Activated T-helper 2 cell treated with anti-CD3 and anti-CD28 coated beads, Interferon-gamma antibody, Interleukin-2, Interleukin-4, amounts not matched to agents 10 μg/mL and 5 μg/mL and 100 μg/mL, durations not matched to agents 14 hours and 24 hours and 36 hours (primary cell): ENCODE measurements at regions of chr3 and their contacts with region 1.

Region 1: DNA sequence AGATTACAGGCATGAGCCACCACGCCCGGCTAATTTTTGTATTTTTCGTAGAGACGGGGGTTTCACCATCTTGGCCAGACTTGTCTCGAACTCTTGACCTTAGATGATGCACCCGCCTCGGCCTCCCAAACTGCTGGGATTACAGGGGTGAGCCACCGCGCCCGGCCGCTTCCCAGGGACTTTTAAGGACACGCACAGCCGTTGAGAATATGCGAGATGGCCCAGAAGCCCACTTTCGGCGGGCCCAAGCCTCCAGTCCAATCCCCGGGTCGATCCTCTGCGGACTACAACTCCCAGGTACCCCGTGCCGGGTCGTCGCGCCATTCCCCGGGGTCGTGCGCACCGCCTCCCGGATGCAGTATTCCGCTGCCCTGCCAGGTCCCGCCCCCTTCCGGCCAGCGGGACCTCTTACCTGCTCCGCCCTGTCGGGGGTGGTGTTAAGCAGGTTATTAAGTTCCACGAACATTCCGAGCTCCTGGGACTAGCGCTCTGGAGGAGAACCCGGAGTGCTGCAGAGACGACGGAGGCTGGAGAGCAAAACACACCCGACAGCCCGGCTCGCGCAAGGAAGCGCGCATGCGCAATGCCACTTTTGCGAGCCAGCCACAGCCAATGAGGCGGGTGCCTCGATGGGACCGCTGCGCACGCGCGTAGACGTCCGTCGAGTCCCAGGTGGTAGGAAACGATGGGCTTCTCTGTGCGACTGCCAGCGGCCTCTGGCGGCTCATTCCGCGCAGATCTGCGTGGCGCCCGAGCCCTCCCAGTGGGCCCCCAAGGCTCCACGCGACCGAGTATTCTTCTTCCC is at the start of gene ELP6:
- DNase-seq: peak; percentile 97
- H3K4me3 Mint-ChIP-seq: peak within 1 kb of the TSS; percentile 97
- H3K27ac Mint-ChIP-seq: peak within 1 kb of the TSS; percentile 96
- H3K4me1 Mint-ChIP-seq: peaks cover 17% of the 10 kb centered on the region
- H3K27me3 Mint-ChIP-seq: peaks cover 4% of the 10 kb centered on the region
- total RNA-seq, gene ELP6: 44.0 and 46.8 TPM in 2 replicates

Region 2: GRCh38 chr3:47282424-47283192 is 230.7 kb before region 1 on chr3 and contains the starts of genes KIF9 and KLHL18:
- intact Hi-C with region 1: loop called (anchors 5 kb)
- DNase-seq: peak; percentile 95
- H3K4me3 Mint-ChIP-seq: peak within 1 kb of the TSS; percentile 98
- H3K27ac Mint-ChIP-seq: peak within 1 kb of the TSS; percentile 100
- H3K4me1 Mint-ChIP-seq: peaks cover 17% of the 10 kb centered on the region
- H3K27me3 Mint-ChIP-seq: no peaks in the 10 kb centered on the region
- total RNA-seq, gene KIF9: 3.5 and 4.4 TPM in 2 replicates
- total RNA-seq, gene KLHL18: 35.7 and 40.9 TPM in 2 replicates

Region 3: DNA sequence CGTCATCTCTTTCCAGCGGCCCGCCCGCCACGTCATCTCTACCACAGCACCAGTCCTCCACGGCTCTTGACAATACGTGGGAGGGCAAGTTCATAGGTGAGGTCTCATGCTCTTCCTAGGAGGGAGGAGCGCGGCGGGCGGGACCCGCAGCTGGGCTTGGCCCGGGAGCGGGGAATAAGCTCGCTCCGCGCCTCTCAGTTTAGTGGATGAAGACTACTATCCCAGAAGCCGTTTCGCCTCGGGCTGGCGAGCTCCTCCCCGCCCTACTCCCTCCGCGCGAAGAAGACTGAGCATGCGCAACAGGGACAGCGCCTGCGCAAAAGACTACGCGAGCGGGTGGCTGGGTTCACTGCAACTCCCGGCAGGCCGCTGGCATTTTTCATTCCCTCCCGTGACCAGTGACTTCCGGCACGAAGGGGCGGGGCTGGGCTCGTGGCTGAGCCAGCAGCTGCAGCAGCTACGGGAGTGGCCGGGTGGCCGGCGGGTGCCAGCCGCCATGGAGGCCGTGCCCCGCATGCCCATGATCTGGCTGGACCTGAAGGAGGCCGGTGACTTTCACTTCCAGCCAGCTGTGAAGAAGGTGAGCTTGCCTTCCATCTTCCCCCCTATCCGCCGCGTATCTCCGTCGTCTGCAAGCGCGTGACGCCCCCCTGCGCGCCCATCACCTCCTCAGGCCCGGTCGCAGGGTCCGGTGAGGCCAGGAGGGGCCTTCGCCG is 132.6 kb before region 1 on chr3 and contains the start of gene PTPN23:
- intact Hi-C with region 1: loop called (anchors 1 kb)
- DNase-seq: peak; percentile 99
- H3K4me3 Mint-ChIP-seq: peak within 1 kb of the TSS; percentile 100
- H3K27ac Mint-ChIP-seq: peak within 1 kb of the TSS; percentile 100
- H3K4me1 Mint-ChIP-seq: peaks cover 33% of the 10 kb centered on the region
- H3K27me3 Mint-ChIP-seq: no peaks in the 10 kb centered on the region
- total RNA-seq, gene PTPN23: 35.7 and 38.3 TPM in 2 replicates

Region 4: DNA sequence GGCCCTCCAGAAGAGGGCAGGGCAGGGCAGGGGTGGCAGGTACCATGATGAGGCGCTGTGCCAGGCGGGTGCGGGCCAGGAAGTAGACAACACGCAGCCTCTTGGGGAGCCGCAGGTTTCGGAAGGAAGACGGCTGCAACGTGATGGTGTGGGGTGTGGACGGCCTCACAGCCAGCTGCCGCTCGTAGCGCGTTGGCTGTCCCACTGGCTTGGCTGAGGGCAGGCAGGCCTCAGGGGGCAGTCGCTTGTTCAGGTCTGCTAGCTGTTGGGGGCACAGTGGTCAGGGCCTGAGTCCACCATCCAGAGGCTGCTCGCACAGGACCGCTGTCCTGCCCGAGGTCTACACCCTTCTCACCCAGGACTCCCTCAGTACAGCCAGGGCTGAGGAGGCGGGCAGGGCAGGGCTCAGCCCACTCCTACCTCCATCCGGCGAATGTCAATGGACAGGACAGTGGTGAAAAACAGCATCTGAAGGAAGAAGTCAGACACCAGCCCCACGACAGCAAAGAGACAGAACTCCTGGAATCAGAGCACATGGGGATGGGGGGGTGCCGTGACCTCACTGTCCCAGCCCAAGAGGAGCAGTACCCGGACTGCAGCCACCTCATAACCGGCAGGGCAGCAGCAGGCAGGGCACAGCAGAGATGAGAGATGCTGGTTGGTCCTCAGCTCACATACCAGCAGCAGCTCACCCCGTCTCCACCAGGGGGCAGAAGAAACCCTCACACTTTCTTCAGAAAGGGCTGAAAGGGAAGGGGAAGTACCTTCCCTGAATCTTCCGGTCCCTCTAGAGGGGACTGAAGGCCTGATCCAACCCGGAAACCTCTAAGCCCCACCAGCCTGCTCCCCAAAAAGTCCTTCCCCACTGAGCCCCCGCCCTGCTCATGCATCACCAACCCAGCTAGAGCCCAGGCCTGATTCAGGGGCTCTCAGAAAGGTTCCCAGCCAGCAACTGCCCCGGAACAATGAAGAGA is 92.5 kb before region 1 on chr3:
- intact Hi-C with region 1: loop called (anchors 1 kb)
- DNase-seq: peak; percentile 83
- H3K4me3 Mint-ChIP-seq: peak overlapping the region; percentile 65
- H3K27ac Mint-ChIP-seq: peak overlapping the region; percentile 99
- H3K4me1 Mint-ChIP-seq: peaks cover 12% of the 10 kb centered on the region
- H3K27me3 Mint-ChIP-seq: no peaks in the 10 kb centered on the region

Region 5: DNA sequence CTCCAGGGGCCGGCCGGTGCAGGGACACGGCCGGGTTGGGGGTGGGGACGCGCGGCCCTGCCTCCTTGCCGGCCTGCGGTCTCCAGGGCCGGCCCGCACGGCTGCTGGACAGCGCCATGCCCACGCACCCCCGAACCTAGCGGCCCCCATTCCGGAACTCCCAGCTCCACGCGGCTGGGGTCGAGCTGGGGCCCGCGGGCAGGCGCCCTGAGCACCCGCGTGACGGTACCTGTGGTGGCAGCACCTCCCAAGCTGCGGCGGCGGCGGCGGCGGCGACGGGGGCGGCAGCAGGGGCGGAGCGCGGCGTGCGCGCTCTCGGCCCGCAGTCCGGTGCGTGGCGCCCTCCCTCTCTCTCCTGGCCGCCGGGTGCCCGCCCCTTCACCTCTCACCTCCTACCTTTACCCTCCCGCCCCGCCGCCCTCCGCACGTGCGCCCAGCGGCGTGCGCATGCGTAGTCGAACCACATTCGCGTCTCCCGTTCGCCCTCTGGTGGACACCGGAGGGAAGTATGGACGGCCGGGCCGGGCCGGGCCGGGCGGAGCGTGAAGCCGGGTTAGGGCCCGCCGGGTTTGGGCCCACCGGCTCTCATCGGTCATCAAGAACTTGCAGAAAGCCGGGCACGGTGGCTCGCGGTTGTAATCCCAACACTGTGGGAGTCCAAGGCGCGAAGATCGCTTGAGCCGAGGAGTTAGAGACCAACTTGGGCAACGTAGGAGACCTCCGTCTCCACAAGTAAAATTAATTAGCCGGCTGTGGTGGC is 37.6 kb before region 1 on chr3 and contains the start of gene SCAP:
- intact Hi-C with region 1: loop called (anchors 1 kb)
- DNase-seq: peak; percentile 92
- H3K4me3 Mint-ChIP-seq: peak within 1 kb of the TSS; percentile 99
- H3K27ac Mint-ChIP-seq: peak within 1 kb of the TSS; percentile 94
- H3K4me1 Mint-ChIP-seq: peaks cover 17% of the 10 kb centered on the region
- H3K27me3 Mint-ChIP-seq: no peaks in the 10 kb centered on the region
- total RNA-seq, gene SCAP: 79.6 and 83.9 TPM in 2 replicates

Region 6: DNA sequence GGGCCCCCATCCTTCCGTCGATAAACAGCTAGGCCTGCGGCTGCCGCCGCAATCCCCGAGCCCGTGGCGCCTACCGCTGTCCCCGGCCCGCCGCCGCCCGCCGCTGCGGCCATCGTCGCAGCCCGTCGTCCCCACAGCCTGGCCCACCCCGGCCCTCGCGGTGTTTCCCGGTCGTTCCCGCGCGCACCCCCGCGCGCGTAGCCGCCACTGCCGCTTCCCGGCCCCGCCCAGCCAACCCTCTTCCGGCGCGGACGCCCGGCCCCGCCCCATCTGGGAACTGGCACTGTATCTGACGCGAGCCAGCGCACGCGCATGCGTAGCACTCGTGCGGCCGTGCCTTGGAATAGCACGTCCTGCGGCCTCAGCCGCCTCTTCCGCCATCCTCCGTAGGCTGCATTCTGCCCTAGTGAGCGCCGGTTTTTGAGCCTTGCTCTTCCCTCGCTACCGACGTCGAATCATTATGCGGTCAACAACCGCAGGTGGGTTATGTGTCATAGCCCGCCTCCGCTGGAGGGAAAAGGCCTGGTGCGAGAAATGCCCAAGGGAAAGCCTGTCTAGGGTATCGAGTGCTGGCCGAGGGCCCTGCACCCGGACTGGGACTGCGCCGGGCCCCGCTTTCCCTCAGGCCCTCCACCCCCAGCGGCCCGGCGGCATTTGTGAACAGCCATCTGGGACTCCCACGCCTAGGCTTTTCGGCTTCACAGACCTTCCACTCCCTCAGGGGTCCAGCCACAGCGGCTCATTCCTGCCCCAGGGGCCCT is 268.5 kb after region 1 on chr3 and contains the start of gene SMARCC1:
- intact Hi-C with region 1: loop called (anchors 1 kb)
- DNase-seq: peak; percentile 99
- H3K4me3 Mint-ChIP-seq: peak within 1 kb of the TSS; percentile 92
- H3K27ac Mint-ChIP-seq: peak within 1 kb of the TSS; percentile 99
- H3K4me1 Mint-ChIP-seq: peaks cover 17% of the 10 kb centered on the region
- H3K27me3 Mint-ChIP-seq: no peaks in the 10 kb centered on the region
- total RNA-seq, gene SMARCC1: 150 and 166 TPM in 2 replicates

Region 7: GRCh38 chr3:47802734-47803477 is 289.6 kb after region 1 on chr3 and contains the start of gene DHX30:
- intact Hi-C with region 1: loop called (anchors 1 kb)
- DNase-seq: peak; percentile 81
- H3K4me3 Mint-ChIP-seq: peak within 1 kb of the TSS; percentile 97
- H3K27ac Mint-ChIP-seq: peak within 1 kb of the TSS; percentile 95
- H3K4me1 Mint-ChIP-seq: peaks cover 13% of the 10 kb centered on the region
- H3K27me3 Mint-ChIP-seq: no peaks in the 10 kb centered on the region
- total RNA-seq, gene DHX30: 123 and 126 TPM in 2 replicates